ENCODE measurements at regions of chr19 and their contacts with region 1.

Region 1: DNA sequence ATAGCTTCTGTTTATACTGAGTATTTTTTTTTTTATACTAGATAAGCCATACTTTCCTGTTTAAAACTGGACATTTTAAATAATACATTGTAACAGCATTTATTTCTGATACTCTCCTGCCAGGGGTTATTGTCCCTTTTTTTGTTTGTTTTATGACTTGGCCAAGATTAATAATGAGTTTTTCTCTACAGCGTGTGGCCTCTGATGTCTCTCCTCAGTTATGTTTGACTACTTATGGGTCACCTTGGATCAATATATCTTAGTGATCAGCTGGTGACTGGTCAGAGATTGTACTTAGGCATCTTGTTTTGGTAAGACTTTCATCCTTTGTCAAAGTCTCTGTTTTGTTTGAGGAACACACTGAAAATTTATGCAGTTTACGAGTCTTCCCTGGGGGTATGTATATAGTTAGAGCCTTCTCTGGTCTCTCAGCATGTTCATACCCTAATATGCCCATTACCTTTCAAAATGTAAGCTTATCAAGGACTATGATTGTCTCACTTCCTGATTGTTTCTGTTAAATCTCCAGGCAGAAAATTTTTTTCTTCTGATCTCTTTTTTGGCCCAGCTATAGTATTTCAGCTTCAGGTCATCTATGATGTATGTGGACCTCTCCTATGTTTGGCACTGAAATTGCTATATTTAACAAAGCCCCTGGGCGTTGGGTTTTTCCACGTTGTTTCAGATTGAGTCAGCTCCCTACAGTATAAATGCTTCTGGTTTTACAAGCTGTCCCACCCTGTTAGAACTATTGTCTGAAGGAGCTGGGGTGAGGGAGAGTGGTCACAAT is 87.9 kb downstream of the URI1 start:
- DNase-seq: peak; percentile 91
- ATAC-seq: peak; percentile 91
- H3K4me3 ChIP-seq: peak overlapping the region; percentile 47; the same call in 1 of the 2 replicates
- H3K27ac ChIP-seq: peak overlapping the region; percentile 99
- H3K4me1 ChIP-seq: peaks cover 41% of the 10 kb centered on the region
- H3K27me3 ChIP-seq: no peaks in the 10 kb centered on the region
- CTCF ChIP-seq: no peak

Region 2: GRCh38 chr19:29941828-29942403 is 88.0 kb before region 1 on chr19 and contains the start of gene URI1:
- CTCF ChIA-PET with region 1: no interaction called
- POLR2A ChIA-PET with region 1: no interaction called
- intact Hi-C with region 1: no loop called
- DNase-seq: peak; percentile 77
- ATAC-seq: peak; percentile 88
- H3K4me3 ChIP-seq: peak within 1 kb of the TSS; percentile 97
- H3K27ac ChIP-seq: peak within 1 kb of the TSS; percentile 30; the same call in 1 of the 2 replicates
- H3K4me1 ChIP-seq: peaks cover 11% of the 10 kb centered on the region
- H3K27me3 ChIP-seq: no peaks in the 10 kb centered on the region
- CTCF ChIP-seq: no peak
- total RNA-seq, gene URI1: 31.0 and 32.4 TPM in 2 replicates

Region 3: DNA sequence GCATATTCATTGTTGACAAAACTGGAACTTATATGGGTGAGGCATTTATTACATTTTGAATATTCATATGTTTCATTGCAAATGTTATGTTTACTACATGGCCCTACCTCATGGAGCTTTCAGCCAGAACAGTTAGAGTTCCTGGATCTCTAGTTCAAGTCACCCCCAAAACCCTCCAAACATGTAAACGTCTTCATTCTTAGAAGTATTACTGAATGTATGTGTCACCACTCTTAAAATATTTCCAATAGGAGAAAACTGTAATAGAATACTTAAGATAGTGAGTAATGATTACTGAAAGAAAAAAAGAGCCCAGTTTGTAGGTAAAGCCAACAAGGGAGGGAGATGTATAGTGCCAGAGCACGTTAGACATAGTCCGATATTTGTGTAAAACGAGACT is 64.4 kb before region 1 on chr19:
- CTCF ChIA-PET with region 1: no interaction called
- POLR2A ChIA-PET with region 1: no interaction called
- intact Hi-C with region 1: loop called (anchors 1 kb)
- DNase-seq: peak; percentile 66
- ATAC-seq: peak; percentile 88
- H3K4me3 ChIP-seq: peak overlapping the region; percentile 42; the same call in 1 of the 2 replicates
- H3K27ac ChIP-seq: peak overlapping the region; percentile 38
- H3K4me1 ChIP-seq: peaks cover 23% of the 10 kb centered on the region
- H3K27me3 ChIP-seq: no peaks in the 10 kb centered on the region
- CTCF ChIP-seq: no peak

Region 4: DNA sequence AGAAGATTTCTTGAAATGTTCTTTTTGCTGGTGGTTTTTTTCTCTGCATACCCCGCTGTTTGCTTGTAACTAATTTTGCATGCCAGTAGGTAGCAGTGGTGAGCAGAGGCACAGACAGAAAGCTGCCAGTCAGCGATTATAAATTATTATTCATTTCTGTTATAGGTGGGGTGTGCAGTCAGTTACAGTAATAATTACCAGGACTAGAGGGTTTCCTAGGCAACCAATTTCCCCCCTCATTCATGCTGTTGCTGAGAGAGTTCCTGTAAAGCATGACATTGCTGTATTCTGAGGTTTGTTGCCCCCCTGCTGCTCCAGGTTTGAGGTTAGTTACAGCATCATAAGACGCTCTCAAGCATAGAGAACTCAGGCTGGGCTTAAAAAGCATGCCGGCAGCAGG is 16.6 kb after region 1 on chr19:
- CTCF ChIA-PET with region 1: no interaction called
- POLR2A ChIA-PET with region 1: no interaction called
- intact Hi-C with region 1: no loop called
- DNase-seq: peak; percentile 36
- ATAC-seq: no peak; the same call in 1 of the 2 replicates
- H3K4me3 ChIP-seq: no peak overlapping the region
- H3K27ac ChIP-seq: no peak overlapping the region
- H3K4me1 ChIP-seq: no peaks in the 10 kb centered on the region
- H3K27me3 ChIP-seq: no peaks in the 10 kb centered on the region
- CTCF ChIP-seq: peak; percentile 63